Activated CD4-positive, alpha-beta T cell treated with anti-CD3 and anti-CD28 coated beads for 36 hours (primary cell): ENCODE measurements at regions of chr7 and their contacts with region 1.

Region 1: GRCh38 chr7:73451780-73452398 is 18.3 kb downstream of the FZD9 start:
- DNase-seq: no peak
- ATAC-seq: peak; percentile 71
- H3K4me3 Mint-ChIP-seq: no peak overlapping the region
- H3K27ac Mint-ChIP-seq: no peak overlapping the region
- H3K4me1 Mint-ChIP-seq: peaks cover 9% of the 10 kb centered on the region
- H3K27me3 Mint-ChIP-seq: no peaks in the 10 kb centered on the region

Region 2: DNA sequence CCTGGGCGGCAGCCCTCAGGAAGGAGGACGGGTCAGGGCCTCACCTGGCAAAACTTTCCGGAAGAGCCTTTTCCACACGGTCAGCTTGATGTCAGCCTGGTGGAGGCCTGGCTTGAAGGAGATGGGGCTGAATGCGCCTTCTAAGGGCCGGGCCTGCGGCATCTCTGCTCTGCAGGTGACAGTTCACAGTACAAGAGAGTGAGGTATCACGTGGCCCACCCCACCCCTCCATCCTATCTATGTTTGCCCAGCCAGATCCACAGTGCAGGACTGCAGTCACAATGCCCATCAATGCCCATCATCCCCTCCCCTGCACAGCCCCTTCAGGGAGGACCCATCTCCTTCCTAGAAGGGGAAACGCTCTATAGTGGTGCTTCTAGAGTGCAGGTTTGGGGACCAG is 135.4 kb before region 1 on chr7:
- CTCF ChIA-PET with region 1: no interaction called
- POLR2A ChIA-PET with region 1: no interaction called
- intact Hi-C with region 1: loop called in 1 of 2 experiments (anchors 5 kb)
- DNase-seq: no peak
- ATAC-seq: no peak
- H3K4me3 Mint-ChIP-seq: no peak overlapping the region
- H3K27ac Mint-ChIP-seq: no peak overlapping the region
- H3K4me1 Mint-ChIP-seq: no peaks in the 10 kb centered on the region
- H3K27me3 Mint-ChIP-seq: no peaks in the 10 kb centered on the region

Region 3: GRCh38 chr7:73328696-73329095 is 123.2 kb before region 1 on chr7:
- CTCF ChIA-PET with region 1: interaction called, 11 read pairs
- POLR2A ChIA-PET with region 1: no interaction called
- intact Hi-C with region 1: loop called (anchors 1 to 5 kb)
- DNase-seq: no peak
- ATAC-seq: no peak
- H3K4me3 Mint-ChIP-seq: no peak overlapping the region
- H3K27ac Mint-ChIP-seq: no peak overlapping the region
- H3K4me1 Mint-ChIP-seq: peaks cover 6% of the 10 kb centered on the region
- H3K27me3 Mint-ChIP-seq: no peaks in the 10 kb centered on the region

Region 4: DNA sequence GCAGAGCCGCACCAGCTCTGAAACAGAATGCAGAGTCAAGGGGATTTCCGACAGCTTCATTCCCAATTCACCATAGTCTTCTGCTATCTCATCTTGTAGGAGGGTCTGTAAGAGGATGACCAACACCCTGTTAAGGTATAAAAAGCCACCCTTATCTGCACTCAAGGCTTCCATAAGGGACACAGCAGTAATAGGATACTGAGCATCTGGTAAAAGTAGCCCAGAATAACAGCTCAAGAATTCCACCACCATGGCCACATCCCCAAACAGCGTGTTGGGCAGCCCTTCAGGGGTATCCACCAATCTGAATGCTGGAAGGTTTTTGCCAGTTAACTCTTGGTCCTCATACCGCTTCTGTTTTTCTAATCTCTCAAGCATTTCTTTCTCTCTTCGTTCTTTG is 25.5 kb after region 1 on chr7:
- CTCF ChIA-PET with region 1: interaction called, 12 read pairs
- POLR2A ChIA-PET with region 1: no interaction called
- intact Hi-C with region 1: no loop called
- DNase-seq: no peak
- ATAC-seq: no peak
- H3K4me3 Mint-ChIP-seq: no peak overlapping the region
- H3K27ac Mint-ChIP-seq: no peak overlapping the region
- H3K4me1 Mint-ChIP-seq: peaks cover 13% of the 10 kb centered on the region
- H3K27me3 Mint-ChIP-seq: no peaks in the 10 kb centered on the region

Region 5: DNA sequence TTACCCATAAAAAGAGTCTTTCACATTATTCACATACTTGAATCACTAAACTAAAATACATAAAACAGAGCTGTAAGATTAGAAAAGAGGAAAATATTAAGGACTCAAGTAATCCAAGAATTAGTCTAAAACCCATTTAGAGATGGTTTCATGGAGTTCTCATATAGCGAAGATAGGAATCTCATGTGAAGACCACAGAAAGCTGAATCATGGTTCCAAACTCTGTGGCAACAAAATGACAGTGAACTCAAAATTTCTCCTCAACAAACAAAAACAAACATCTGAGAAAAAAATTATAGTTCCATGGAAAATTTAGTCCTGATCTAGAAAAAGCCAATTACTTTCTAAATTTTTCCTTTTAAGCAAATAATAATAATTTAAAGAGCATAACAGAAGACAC is 35.6 kb after region 1 on chr7:
- CTCF ChIA-PET with region 1: interaction called, 10 read pairs
- POLR2A ChIA-PET with region 1: no interaction called
- intact Hi-C with region 1: no loop called
- DNase-seq: no peak
- ATAC-seq: no peak
- H3K4me3 Mint-ChIP-seq: no peak overlapping the region
- H3K27ac Mint-ChIP-seq: no peak overlapping the region
- H3K4me1 Mint-ChIP-seq: peaks cover 3% of the 10 kb centered on the region
- H3K27me3 Mint-ChIP-seq: no peaks in the 10 kb centered on the region

Region 6: DNA sequence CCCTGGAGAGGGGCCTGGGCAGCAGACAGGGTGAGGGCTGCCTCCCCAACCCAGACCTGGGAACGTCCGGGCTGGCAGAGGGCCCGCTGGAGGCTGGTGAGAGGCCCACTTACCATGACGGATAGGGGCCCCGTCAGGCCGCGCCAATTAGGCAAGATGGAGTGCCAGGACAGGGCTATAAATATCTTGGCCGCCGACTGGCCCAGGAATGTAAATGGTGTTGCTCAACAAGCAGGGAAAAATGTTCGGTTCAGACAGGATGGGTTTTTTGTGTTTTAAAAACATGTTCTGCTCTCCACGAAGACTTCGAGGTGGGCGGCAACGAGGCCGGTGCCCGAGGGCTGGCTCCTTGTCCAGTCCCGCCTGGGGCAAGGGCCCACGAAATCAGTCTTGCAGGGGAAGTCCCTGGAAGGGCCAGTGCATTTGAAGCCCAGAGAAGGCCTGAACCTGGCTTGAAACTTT is 540.2 kb after region 1 on chr7:
- CTCF ChIA-PET with region 1: no interaction called
- POLR2A ChIA-PET with region 1: no interaction called
- intact Hi-C with region 1: no loop called
- DNase-seq: no peak
- ATAC-seq: no peak
- H3K4me3 Mint-ChIP-seq: no peak overlapping the region
- H3K27ac Mint-ChIP-seq: no peak overlapping the region
- H3K4me1 Mint-ChIP-seq: no peaks in the 10 kb centered on the region
- H3K27me3 Mint-ChIP-seq: no peaks in the 10 kb centered on the region